Activated T-helper 1 cell treated with anti-CD3 and anti-CD28 coated beads, Interleukin-12 subunit alpha, Interleukin-12 subunit beta, Interleukin-2, Interleukin-4 antibody, amounts not matched to agents 30 ng/mL and 10 ng/mL and 1 ng/mL, durations not matched to agents 14 hours and 24 hours and 36 hours (primary cell): ENCODE measurements at regions of chr15 and their contacts with region 1.

Region 1: DNA sequence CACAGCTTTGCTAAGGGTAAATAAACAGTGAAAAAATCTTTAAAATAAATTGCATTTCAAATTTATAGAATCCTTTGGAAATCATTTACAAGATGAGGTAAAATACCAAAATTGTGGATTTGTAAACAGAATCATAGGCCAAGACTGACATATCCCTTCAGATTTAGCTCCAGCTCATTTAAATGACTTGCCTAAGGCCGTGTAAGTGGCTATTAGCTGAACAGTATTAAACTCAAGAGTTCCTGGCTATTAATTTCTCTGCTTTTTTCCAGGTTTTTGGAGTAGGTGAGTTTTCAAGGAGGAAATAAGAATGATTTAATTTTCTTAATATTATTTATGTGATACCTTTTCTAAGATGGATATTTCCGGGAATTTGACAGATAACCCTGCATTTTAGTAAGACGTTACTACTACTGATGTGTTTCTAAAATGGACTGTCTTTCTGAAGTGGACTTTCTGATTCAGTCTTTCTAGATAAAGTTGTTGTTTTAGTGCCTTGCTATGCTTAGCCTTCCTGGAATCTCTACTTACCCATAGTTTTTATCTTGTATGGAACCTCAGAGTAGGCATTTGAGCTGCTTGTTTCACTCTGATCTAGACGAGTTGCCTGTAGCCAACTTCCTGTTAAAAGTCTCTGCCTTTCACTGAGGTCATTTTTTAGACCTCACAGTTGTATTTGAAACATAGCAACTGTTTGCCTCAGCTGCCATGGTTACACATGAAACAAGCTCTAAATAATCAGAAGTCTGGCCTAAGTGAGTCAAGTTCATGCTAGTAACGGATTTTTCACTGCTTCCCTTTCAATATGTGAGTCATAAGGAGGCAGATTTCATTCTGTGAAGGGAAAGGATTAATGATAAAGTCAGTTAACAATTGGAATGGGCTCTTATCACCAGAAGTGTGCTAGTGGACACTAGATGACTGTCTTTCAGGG is 127.0 kb downstream of the KLHL25 start:
- DNase-seq: peak; percentile 46
- H3K4me3 Mint-ChIP-seq: peak overlapping the region; percentile 20
- H3K27ac Mint-ChIP-seq: peak overlapping the region; percentile 97
- H3K4me1 Mint-ChIP-seq: peaks cover 22% of the 10 kb centered on the region
- H3K27me3 Mint-ChIP-seq: no peaks in the 10 kb centered on the region

Region 2: GRCh38 chr15:85625856-85626255 is 41.9 kb before region 1 on chr15:
- intact Hi-C with region 1: loop called (anchors 1 kb)
- DNase-seq: peak; percentile 35
- H3K4me3 Mint-ChIP-seq: peak overlapping the region; percentile 41
- H3K27ac Mint-ChIP-seq: peak overlapping the region; percentile 89
- H3K4me1 Mint-ChIP-seq: peaks cover 56% of the 10 kb centered on the region
- H3K27me3 Mint-ChIP-seq: no peaks in the 10 kb centered on the region

Region 3: GRCh38 chr15:85679231-85679630 is 11.5 kb after region 1 on chr15:
- intact Hi-C with region 1: no loop called
- DNase-seq: no peak
- H3K4me3 Mint-ChIP-seq: no peak overlapping the region
- H3K27ac Mint-ChIP-seq: no peak overlapping the region
- H3K4me1 Mint-ChIP-seq: peaks cover 8% of the 10 kb centered on the region
- H3K27me3 Mint-ChIP-seq: no peaks in the 10 kb centered on the region

Region 4: GRCh38 chr15:85689729-85690128 is 22.0 kb after region 1 on chr15:
- intact Hi-C with region 1: loop called (anchors 1 kb)
- DNase-seq: peak; percentile 56
- H3K4me3 Mint-ChIP-seq: peak overlapping the region; percentile 96
- H3K27ac Mint-ChIP-seq: peak overlapping the region; percentile 100
- H3K4me1 Mint-ChIP-seq: peaks cover 73% of the 10 kb centered on the region
- H3K27me3 Mint-ChIP-seq: no peaks in the 10 kb centered on the region

Region 5: GRCh38 chr15:85702321-85703101 is 34.8 kb after region 1 on chr15:
- intact Hi-C with region 1: loop called (anchors 1 kb)
- DNase-seq: peak; percentile 29
- H3K4me3 Mint-ChIP-seq: peak overlapping the region; percentile 78
- H3K27ac Mint-ChIP-seq: peak overlapping the region; percentile 98
- H3K4me1 Mint-ChIP-seq: peaks cover 66% of the 10 kb centered on the region
- H3K27me3 Mint-ChIP-seq: no peaks in the 10 kb centered on the region

Region 6: DNA sequence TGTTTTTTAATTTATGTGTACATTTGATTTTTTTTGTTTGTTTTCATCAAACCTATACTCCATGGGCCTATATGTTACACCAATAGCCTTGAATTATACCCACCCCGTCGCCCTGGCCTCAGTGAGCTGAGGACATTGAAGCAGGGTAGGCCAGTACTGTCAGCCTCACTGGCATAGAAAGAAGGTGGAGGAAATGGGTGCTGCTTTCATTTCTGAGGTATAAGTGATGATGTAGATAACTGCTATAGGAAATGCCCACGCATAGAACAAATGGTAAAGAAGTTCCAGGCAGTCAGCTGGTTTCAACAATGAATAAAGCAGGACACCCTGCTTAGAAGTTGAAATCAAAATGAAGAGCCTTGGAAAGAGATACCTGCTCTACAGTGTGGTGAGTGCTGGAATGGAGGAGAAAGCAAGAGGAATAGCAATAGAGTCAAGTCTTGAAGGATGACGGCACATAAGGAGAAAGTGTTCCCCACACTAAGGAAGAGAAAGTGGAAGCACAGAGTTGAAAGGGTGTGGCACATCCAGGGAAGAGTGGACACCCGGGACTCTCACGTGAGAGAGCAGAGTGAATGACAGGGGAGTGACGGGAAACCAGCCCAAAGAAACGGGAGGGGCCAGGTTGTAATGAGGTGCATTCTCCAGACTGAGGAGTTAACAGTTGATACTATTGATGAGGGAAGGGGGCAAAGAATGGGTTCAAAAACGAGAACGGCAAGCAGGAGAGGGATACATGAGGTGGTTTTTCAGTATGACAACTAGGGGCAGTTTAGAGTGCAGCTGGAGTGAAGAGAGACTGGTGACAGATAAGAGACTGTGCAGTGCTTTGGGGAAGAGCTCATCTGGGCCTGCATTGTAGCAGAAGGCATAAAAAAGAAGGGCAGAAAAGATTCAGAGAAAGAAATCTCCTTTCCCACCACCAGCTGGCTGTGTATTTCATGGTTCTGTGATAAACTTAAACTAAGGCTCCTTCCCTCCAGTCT is 56.5 kb after region 1 on chr15:
- intact Hi-C with region 1: loop called (anchors 1 kb)
- DNase-seq: no peak
- H3K4me3 Mint-ChIP-seq: peak overlapping the region; percentile 72
- H3K27ac Mint-ChIP-seq: peak overlapping the region; percentile 90
- H3K4me1 Mint-ChIP-seq: peaks cover 47% of the 10 kb centered on the region
- H3K27me3 Mint-ChIP-seq: no peaks in the 10 kb centered on the region